ENCODE measurements at regions of chr6 and their contacts with region 1.

Region 1: GRCh38 chr6:68634726-68635411 is at the start of gene ADGRB3:
- DNase-seq: peak; percentile 89
- H3K4me3 ChIP-seq: peak within 1 kb of the TSS; percentile 66 to 70 (median 67)
- H3K27ac ChIP-seq: peak within 1 kb of the TSS; percentile 74 to 78 (median 74)
- H3K4me1 ChIP-seq: peaks cover 0 to 19% (median 15%) of the 10 kb centered on the region in 4 donors
- H3K27me3 ChIP-seq: peaks cover 0 to 11% (median 1%) of the 10 kb centered on the region in 3 donors
- CTCF ChIP-seq: peak in 1 of 4 experiments; percentile 13
- EP300 ChIP-seq: no peak
- POLR2A ChIP-seq: no peak
- total RNA-seq, gene ADGRB3: 9.4 to 11.5 (median 10.3) TPM

Region 2: GRCh38 chr6:68778356-68779020 is 143.6 kb after region 1 on chr6:
- intact Hi-C with region 1: loop called (anchors 2 kb)
- DNase-seq: no peak
- H3K4me3 ChIP-seq: no peak overlapping the region
- H3K27ac ChIP-seq: no peak overlapping the region
- H3K4me1 ChIP-seq: no peaks in the 10 kb centered on the region
- H3K27me3 ChIP-seq: no peaks in the 10 kb centered on the region
- CTCF ChIP-seq: peak in 2 of 4 experiments; percentile 23 to 39
- EP300 ChIP-seq: no peak
- POLR2A ChIP-seq: no peak

Region 3: DNA sequence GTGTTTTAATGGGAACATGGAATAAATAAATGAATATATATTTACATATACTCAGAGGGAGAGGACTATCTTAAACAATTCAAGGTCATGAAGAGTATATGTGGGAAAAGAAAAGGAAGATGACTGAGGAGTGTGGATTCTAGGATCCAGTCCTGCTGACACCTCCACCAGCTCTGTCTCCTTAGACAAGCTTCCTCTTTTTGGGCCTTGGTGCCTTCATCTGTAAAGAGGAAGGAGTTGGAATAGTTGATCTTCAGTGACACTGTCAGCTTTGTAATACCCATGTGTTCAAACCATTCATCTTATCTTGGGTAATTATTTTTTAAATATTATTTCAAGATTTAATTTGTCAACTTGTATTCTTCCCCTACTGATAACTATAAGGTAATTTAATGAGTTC is 338.2 kb after region 1 on chr6:
- intact Hi-C with region 1: loop called (anchors 5 kb)
- DNase-seq: no peak
- H3K4me3 ChIP-seq: no peak overlapping the region
- H3K27ac ChIP-seq: no peak overlapping the region
- H3K4me1 ChIP-seq: peaks cover 0 to 11% (median 0%) of the 10 kb centered on the region in 4 donors
- H3K27me3 ChIP-seq: no peaks in the 10 kb centered on the region
- CTCF ChIP-seq: no peak
- EP300 ChIP-seq: no peak
- POLR2A ChIP-seq: no peak

Measured in sigmoid colon (tissue), 7 donors.